Gastrocnemius medialis (tissue), 4 donors: ENCODE measurements at regions of chr7 and their contacts with region 1.

Region 1: DNA sequence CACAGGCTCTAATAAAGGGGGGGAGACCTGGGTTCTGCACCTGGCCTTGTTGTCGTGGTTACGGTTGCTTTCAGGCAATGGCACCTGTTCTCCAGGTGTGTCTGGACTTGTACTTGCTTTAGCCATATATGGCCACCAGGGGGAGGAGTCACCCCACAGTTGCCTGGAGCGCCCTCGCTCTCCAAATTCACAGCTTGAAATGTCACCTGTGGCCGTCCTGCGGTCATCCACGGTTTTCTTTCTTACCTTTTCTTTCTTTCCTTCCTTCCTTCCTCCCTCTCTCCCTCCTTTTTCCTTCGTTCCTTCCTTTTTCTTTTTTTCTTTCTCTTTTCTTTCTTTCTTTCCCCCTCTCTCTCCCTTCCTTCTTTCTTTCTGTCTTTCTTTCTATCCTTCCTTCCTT is 157.2 kb upstream of the ZNF92 start:
- DNase-seq: no peak
- ATAC-seq: no peak
- H3K4me3 ChIP-seq: no peak overlapping the region
- H3K27ac ChIP-seq: no peak overlapping the region
- H3K4me1 ChIP-seq: no peaks in the 10 kb centered on the region
- H3K27me3 ChIP-seq: no peaks in the 10 kb centered on the region
- CTCF ChIP-seq: peak in 3 of 5 experiments; percentile 34 to 43 (median 35)
- POLR2A ChIP-seq: no peak

Region 2: DNA sequence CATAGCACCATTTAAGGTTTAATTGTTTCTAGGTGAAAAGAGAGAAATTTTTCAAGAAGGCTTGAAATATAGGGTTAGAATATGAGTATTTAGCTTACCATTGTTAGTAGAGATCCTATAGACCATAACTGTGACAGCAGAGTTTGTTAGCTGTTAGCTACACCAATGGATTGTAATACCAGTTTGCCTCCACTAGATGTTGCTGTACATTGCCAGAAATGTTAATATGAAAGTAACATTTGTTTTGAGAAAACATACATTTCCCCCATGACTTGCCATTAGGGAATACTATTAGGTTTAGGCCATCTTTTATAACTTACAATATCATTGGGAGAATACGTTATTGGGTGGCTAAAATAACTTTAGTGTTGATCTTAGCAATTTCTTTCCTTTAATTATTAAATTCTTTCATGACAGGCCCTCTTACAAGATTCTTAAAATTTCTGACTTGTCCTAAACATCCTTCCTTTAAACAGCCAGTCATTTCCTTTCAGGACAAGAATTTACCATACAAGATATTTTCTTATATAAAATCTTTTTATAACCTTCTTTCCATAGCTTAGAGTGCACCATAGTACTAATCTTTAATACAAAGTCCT is 265.1 kb before region 1 on chr7:
- in situ Hi-C with region 1: no loop called
- intact Hi-C with region 1: loop called (anchors 10 kb)
- DNase-seq: no peak
- ATAC-seq: peak; percentile 75 to 82
- H3K4me3 ChIP-seq: peak overlapping the region in 1 of 4 donors; percentile 14
- H3K27ac ChIP-seq: peak overlapping the region in 2 of 4 donors; percentile 40 to 77
- H3K4me1 ChIP-seq: peaks cover 8 to 11% of the 10 kb centered on the region in 2 donors
- H3K27me3 ChIP-seq: peaks cover 0 to 15% (median 11%) of the 10 kb centered on the region in 3 donors
- CTCF ChIP-seq: peak; percentile 67 to 95 (median 76)
- POLR2A ChIP-seq: no peak

Region 3: GRCh38 chr7:65307651-65308299 is 91.3 kb after region 1 on chr7:
- in situ Hi-C with region 1: no loop called
- intact Hi-C with region 1: loop called (anchors 5 kb)
- DNase-seq: peak in 1 of 2 donors; percentile 8
- ATAC-seq: peak in 1 of 2 donors; percentile 39
- H3K4me3 ChIP-seq: no peak overlapping the region
- H3K27ac ChIP-seq: no peak overlapping the region
- H3K4me1 ChIP-seq: no peaks in the 10 kb centered on the region
- H3K27me3 ChIP-seq: no peaks in the 10 kb centered on the region
- CTCF ChIP-seq: peak in 4 of 5 experiments; percentile 37 to 83 (median 69)
- POLR2A ChIP-seq: no peak